ENCODE measurements at regions of chr6 and their contacts with region 1.

Region 1: DNA sequence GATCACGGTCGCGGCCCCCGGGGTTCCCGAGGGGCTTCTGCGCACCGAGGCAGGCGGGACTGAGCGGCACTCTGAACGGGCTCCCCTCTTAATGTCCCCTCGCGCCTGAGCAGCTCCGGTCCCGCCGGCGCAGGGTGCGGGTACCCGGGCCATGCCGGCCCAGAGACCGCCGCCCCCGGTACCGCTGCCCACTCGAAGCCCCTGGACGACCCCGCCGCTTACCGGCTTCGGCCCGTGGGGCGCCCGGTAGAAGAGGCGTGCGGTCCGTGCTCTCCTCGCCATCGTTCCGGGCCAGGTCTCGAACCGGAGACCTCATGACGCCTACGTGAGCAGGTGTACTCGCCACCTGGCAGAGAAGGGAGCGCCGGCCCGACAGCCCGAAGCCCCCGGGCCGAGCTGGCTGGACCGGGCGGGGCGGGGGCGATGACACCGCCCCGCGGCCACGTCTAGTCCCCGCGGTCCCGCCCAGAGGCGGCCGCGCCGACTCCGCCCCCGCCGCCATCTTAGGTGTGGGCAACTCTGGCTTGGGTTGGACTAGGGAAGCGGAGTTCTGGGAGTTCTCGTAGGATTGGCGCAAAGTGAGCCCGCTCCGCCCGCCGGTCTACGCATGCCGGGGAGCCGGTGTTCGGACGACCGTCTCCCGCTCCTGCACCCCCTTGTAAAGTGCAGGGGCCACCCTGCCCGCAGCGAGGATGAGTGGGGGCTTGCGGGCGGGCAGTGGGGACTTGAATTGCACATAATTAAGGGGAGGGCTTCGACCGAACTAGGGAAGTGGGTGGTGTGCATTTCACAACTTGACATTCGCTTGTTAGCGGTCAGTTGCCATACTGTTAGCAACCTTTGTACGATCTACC is at the start of gene SLC17A5:
- DNase-seq: peak; percentile 80 to 91 (median 86)
- H3K4me3 ChIP-seq: peak within 1 kb of the TSS; percentile 85 to 95
- H3K4me3 Mint-ChIP-seq: peak within 1 kb of the TSS; percentile 99 to 100 (median 99)
- H3K27ac ChIP-seq: peak within 1 kb of the TSS; percentile 99
- H3K27ac Mint-ChIP-seq: peak within 1 kb of the TSS; percentile 95 to 99 (median 99)
- H3K4me1 ChIP-seq: peaks cover 22% of the 10 kb centered on the region
- H3K4me1 Mint-ChIP-seq: peaks cover 13 to 40% (median 34%) of the 10 kb centered on the region in 4 donors
- H3K27me3 ChIP-seq: no peaks in the 10 kb centered on the region
- H3K27me3 Mint-ChIP-seq: no peaks in the 10 kb centered on the region
- total RNA-seq, gene SLC17A5: 16.1 to 16.2 TPM

Region 2: DNA sequence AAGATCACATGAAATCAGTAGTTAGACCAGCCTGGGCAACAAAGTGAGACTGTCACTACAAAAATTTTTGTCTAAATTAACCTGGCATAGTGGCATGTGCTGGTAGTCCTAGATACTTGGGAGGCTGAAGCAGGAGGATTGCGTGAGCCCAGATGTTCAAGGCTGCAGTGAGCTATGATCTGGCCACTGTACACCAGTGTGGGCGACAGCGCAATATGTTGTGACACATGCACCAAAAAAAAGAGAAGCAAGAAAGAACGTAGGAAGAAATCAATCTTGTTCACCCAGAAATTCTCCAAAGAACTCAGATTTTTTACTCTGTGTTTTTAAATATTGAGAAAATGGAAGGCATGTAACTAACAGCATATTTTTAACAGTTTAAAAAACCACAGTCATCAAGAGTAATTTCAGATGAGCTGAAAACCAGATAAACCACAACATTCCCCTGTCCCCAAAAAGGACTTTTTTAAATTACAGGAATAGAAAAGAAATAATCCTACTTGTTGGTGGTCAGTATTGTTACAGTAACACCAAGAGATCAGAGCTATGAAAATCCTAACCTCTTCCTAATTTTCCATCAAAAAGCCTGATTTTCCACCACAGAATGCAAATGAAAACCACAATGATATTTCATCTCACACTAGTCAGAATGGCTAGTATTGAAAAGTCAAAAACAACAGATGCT is 668.7 kb before region 1 on chr6:
- CTCF ChIA-PET with region 1: no interaction called
- POLR2A ChIA-PET with region 1: no interaction called
- intact Hi-C with region 1: no loop called
- DNase-seq: no peak
- H3K4me3 ChIP-seq: no peak overlapping the region
- H3K4me3 Mint-ChIP-seq: no peak overlapping the region
- H3K27ac ChIP-seq: no peak overlapping the region
- H3K27ac Mint-ChIP-seq: no peak overlapping the region
- H3K4me1 ChIP-seq: no peaks in the 10 kb centered on the region
- H3K4me1 Mint-ChIP-seq: no peaks in the 10 kb centered on the region
- H3K27me3 ChIP-seq: no peaks in the 10 kb centered on the region
- H3K27me3 Mint-ChIP-seq: no peaks in the 10 kb centered on the region

Region 3: DNA sequence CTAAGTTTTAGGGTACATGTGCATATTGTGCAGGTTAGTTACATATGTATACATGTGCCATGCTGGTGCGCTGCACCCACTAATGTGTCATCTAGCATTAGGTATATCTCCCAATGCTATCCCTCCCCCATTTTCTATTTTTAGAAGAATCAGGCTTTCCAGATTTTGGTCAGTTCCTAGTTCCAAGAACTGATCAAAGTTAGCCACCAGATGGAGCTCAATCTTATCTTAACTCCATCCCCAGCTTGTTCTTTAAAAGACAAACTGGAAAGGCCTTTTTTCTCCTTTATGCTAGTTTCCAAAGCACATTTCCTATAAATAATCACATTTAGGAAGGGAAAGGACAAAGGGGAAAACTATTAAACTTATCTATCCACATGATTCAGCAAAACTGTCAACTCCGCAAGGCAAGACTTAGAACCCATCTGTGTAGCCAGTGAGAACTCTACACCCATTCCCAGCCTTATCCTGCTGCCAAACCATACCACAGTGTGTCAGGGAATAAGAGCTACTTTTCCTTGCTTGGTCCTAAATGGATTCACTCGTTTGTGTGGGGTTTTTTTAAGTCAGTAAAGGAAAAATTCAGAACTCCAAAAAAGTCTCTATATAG is 368.0 kb before region 1 on chr6:
- CTCF ChIA-PET with region 1: no interaction called
- POLR2A ChIA-PET with region 1: no interaction called
- intact Hi-C with region 1: loop called (anchors 10 kb)
- DNase-seq: peak in 3 of 5 donors; percentile 8 to 13 (median 12)
- H3K4me3 ChIP-seq: no peak overlapping the region
- H3K4me3 Mint-ChIP-seq: no peak overlapping the region
- H3K27ac ChIP-seq: no peak overlapping the region
- H3K27ac Mint-ChIP-seq: no peak overlapping the region
- H3K4me1 ChIP-seq: no peaks in the 10 kb centered on the region
- H3K4me1 Mint-ChIP-seq: no peaks in the 10 kb centered on the region
- H3K27me3 ChIP-seq: no peaks in the 10 kb centered on the region
- H3K27me3 Mint-ChIP-seq: no peaks in the 10 kb centered on the region

Region 4: GRCh38 chr6:73515204-73515655 is 138.6 kb before region 1 on chr6:
- CTCF ChIA-PET with region 1: interaction called, 33 read pairs
- POLR2A ChIA-PET with region 1: interaction called, 238 read pairs
- intact Hi-C with region 1: loop called (anchors 1 kb)
- DNase-seq: peak in 1 of 5 donors; percentile 38
- H3K4me3 ChIP-seq: no peak overlapping the region
- H3K4me3 Mint-ChIP-seq: peak overlapping the region in 5 of 8 donors; percentile 18 to 83 (median 29)
- H3K27ac ChIP-seq: peak overlapping the region; percentile 31
- H3K27ac Mint-ChIP-seq: peak overlapping the region; percentile 70 to 99 (median 90)
- H3K4me1 ChIP-seq: peaks cover 55% of the 10 kb centered on the region
- H3K4me1 Mint-ChIP-seq: peaks cover 36 to 62% (median 47%) of the 10 kb centered on the region in 4 donors
- H3K27me3 ChIP-seq: no peaks in the 10 kb centered on the region
- H3K27me3 Mint-ChIP-seq: no peaks in the 10 kb centered on the region

Region 5: GRCh38 chr6:73585566-73586415 is 68.0 kb before region 1 on chr6:
- CTCF ChIA-PET with region 1: interaction called, 10 read pairs
- POLR2A ChIA-PET with region 1: interaction called, 24 read pairs
- intact Hi-C with region 1: loop called (anchors 5 kb)
- DNase-seq: peak; percentile 57 to 69 (median 63)
- H3K4me3 ChIP-seq: peak overlapping the region; percentile 54 to 56
- H3K4me3 Mint-ChIP-seq: peak overlapping the region; percentile 78 to 88 (median 84)
- H3K27ac ChIP-seq: peak overlapping the region; percentile 70
- H3K27ac Mint-ChIP-seq: peak overlapping the region; percentile 93 to 99 (median 98)
- H3K4me1 ChIP-seq: peaks cover 26% of the 10 kb centered on the region
- H3K4me1 Mint-ChIP-seq: peaks cover 15 to 34% (median 19%) of the 10 kb centered on the region in 4 donors
- H3K27me3 ChIP-seq: no peaks in the 10 kb centered on the region
- H3K27me3 Mint-ChIP-seq: no peaks in the 10 kb centered on the region

Region 6: DNA sequence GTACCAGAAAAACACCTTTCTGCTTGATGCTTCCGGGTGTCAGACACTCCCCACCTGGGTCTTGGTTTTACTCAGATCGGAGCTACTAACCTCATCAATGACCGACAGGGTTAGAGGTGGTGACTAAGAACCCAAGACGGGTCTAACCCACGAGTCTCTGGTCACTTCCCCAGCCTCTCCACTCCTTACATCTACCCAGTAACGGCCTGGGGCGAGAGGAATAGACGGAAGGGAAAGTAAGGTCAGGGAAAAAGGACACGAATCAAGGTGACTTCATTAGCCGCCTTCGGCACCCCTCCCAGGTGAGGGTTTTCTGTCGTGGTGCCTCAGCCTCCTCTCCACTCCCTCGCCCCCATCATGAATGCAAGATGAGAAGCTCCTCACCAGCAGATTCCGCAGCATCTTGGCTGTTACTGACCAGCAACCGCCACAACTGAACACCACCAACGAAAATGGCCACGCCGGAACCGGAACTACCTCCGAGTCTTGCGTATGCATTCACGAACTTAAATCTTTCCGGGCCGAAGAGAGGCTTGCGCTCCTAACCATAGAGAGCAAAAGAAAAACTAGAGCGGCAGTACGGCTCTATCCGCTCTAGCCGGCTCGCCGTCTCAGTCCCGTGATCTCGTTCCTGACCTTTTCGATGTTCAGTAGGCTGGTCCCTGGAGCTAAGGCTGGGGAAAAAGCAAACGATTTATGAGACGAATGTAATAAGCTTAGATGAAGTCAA is 1589.7 kb after region 1 on chr6 and contains the start of gene COX7A2:
- CTCF ChIA-PET with region 1: interaction called, 4 read pairs
- POLR2A ChIA-PET with region 1: interaction called, 12 read pairs
- intact Hi-C with region 1: loop called (anchors 1 kb)
- DNase-seq: peak; percentile 84 to 92 (median 87)
- H3K4me3 ChIP-seq: peak within 1 kb of the TSS; percentile 90 to 93
- H3K4me3 Mint-ChIP-seq: peak within 1 kb of the TSS; percentile 96 to 99 (median 98)
- H3K27ac ChIP-seq: peak within 1 kb of the TSS; percentile 96
- H3K27ac Mint-ChIP-seq: peak within 1 kb of the TSS; percentile 91 to 100 (median 99)
- H3K4me1 ChIP-seq: peaks cover 24% of the 10 kb centered on the region
- H3K4me1 Mint-ChIP-seq: peaks cover 14 to 47% (median 24%) of the 10 kb centered on the region in 4 donors
- H3K27me3 ChIP-seq: no peaks in the 10 kb centered on the region
- H3K27me3 Mint-ChIP-seq: peaks cover 4 to 9% of the 10 kb centered on the region in 2 donors
- total RNA-seq, gene COX7A2: 188 to 201 TPM

Measured in CD4-positive, alpha-beta memory T cell (primary cell).